IMR-90 (cell line): ENCODE measurements at regions of chr12 and their contacts with region 1.

Region 1: GRCh38 chr12:90978117-90978770 is 23.3 kb upstream of the CCER1 start:
- DNase-seq: peak; percentile 79
- ATAC-seq: peak; percentile 80
- H3K4me3 ChIP-seq: no peak overlapping the region
- H3K27ac ChIP-seq: peak overlapping the region; percentile 77; the same call in 1 of the 2 replicates
- H3K4me1 ChIP-seq: peaks cover 12% of the 10 kb centered on the region
- H3K27me3 ChIP-seq: no peaks in the 10 kb centered on the region
- CTCF ChIP-seq: peak; percentile 89
- POLR2A ChIP-seq: 0 out of 2 replicates have a peak, but pooled peaks have one; percentile 36
- RAD21 ChIP-seq: peak; percentile 91

Region 2: GRCh38 chr12:90883456-90883855 is 94.8 kb before region 1 on chr12:
- CTCF ChIA-PET with region 1: no interaction called
- POLR2A ChIA-PET with region 1: no interaction called
- dilution Hi-C with region 1: no loop called
- in situ Hi-C with region 1: no loop called
- intact Hi-C with region 1: no loop called
- DNase-seq: no peak
- ATAC-seq: no peak
- H3K4me3 ChIP-seq: no peak overlapping the region
- H3K27ac ChIP-seq: no peak overlapping the region
- H3K4me1 ChIP-seq: no peaks in the 10 kb centered on the region
- H3K27me3 ChIP-seq: no peaks in the 10 kb centered on the region
- CTCF ChIP-seq: no peak
- POLR2A ChIP-seq: no peak
- RAD21 ChIP-seq: no peak

Region 3: GRCh38 chr12:90999966-91000365 is 21.7 kb after region 1 on chr12:
- CTCF ChIA-PET with region 1: no interaction called
- POLR2A ChIA-PET with region 1: no interaction called
- dilution Hi-C with region 1: no loop called
- in situ Hi-C with region 1: no loop called
- intact Hi-C with region 1: loop called (anchors 1 kb)
- DNase-seq: peak; percentile 48
- ATAC-seq: peak; percentile 27; the same call in 1 of the 2 replicates
- H3K4me3 ChIP-seq: no peak overlapping the region
- H3K27ac ChIP-seq: no peak overlapping the region
- H3K4me1 ChIP-seq: peaks cover 2% of the 10 kb centered on the region; the same call in 1 of the 2 replicates
- H3K27me3 ChIP-seq: no peaks in the 10 kb centered on the region
- CTCF ChIP-seq: no peak
- POLR2A ChIP-seq: no peak
- RAD21 ChIP-seq: no peak

Region 4: DNA sequence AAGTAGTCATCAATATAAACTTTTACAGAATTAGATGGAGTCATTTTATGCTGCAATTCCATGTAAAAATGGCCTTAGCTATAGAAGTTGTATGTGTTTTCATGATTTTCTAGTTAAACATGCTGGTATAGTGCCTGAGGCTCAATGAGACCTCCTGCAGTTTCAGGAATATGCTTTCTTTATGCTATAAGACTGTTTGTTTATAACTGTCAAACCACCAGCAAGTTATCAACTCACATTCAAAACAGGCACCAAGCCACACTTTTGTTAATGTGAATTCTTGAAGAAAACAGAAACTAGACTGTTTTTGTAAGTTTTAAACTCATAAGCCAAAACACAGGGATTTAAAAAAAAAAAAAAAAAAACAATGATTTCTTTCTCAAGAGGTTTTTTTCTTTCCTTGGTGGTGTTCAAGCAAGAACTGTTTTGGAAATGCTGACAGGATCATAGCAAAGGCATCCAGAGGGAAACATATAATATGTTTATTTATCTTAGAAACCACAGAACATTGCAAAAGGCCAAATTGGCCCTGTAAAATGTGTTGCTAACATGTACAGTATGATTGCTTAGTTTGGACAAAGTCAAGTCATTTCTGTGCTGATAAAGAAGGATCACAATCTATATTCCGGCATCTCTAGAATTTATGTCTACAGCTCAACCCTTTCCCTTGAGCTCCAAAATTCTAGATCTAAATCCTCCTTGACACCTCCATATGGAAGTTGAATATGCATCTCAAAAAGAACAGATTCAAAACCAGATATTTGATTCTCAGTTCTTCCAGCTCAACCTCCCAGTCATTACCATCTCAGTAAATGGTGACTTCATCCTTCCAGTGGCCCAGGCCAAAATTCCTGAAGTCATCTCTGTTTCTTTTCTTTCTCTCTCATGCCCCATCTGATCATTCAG is 162.0 kb after region 1 on chr12:
- CTCF ChIA-PET with region 1: interaction called, 5 read pairs
- POLR2A ChIA-PET with region 1: no interaction called
- dilution Hi-C with region 1: no loop called
- in situ Hi-C with region 1: loop called (anchors 10 kb)
- intact Hi-C with region 1: loop called (anchors 1 kb)
- DNase-seq: peak; percentile 95
- ATAC-seq: peak; percentile 53
- H3K4me3 ChIP-seq: no peak overlapping the region
- H3K27ac ChIP-seq: peak overlapping the region; percentile 93; the same call in 1 of the 2 replicates
- H3K4me1 ChIP-seq: peaks cover 16% of the 10 kb centered on the region
- H3K27me3 ChIP-seq: no peaks in the 10 kb centered on the region
- CTCF ChIP-seq: no peak
- POLR2A ChIP-seq: no peak
- RAD21 ChIP-seq: no peak

Region 5: GRCh38 chr12:91178139-91178561 is 199.9 kb after region 1 on chr12:
- CTCF ChIA-PET with region 1: interaction called, 3 read pairs
- POLR2A ChIA-PET with region 1: interaction called, 10 read pairs
- dilution Hi-C with region 1: no loop called
- in situ Hi-C with region 1: no loop called
- intact Hi-C with region 1: loop called (anchors 2 kb)
- DNase-seq: peak; percentile 62
- ATAC-seq: peak; percentile 8
- H3K4me3 ChIP-seq: peak overlapping the region; percentile 94
- H3K27ac ChIP-seq: peak overlapping the region; percentile 99
- H3K4me1 ChIP-seq: peaks cover 7% of the 10 kb centered on the region
- H3K27me3 ChIP-seq: no peaks in the 10 kb centered on the region
- CTCF ChIP-seq: peak; percentile 70
- POLR2A ChIP-seq: no peak
- RAD21 ChIP-seq: peak; percentile 74

Region 6: GRCh38 chr12:91331371-91331770 is 353.1 kb after region 1 on chr12:
- CTCF ChIA-PET with region 1: interaction called, 12 read pairs
- POLR2A ChIA-PET with region 1: interaction called, 3 read pairs
- dilution Hi-C with region 1: loop called (anchors 25 kb)
- in situ Hi-C with region 1: no loop called
- intact Hi-C with region 1: loop called (anchors 2 kb)
- DNase-seq: no peak
- ATAC-seq: no peak
- H3K4me3 ChIP-seq: no peak overlapping the region
- H3K27ac ChIP-seq: no peak overlapping the region
- H3K4me1 ChIP-seq: peaks cover 5% of the 10 kb centered on the region
- H3K27me3 ChIP-seq: no peaks in the 10 kb centered on the region
- CTCF ChIP-seq: no peak
- POLR2A ChIP-seq: no peak
- RAD21 ChIP-seq: no peak